CD4-positive, alpha-beta memory T cell (primary cell): ENCODE measurements at regions of chr11 and their contacts with region 1.

Region 1: GRCh38 chr11:33320016-33320813 is 63.0 kb downstream of the HIPK3 start:
- DNase-seq: no peak
- H3K4me3 ChIP-seq: no peak overlapping the region
- H3K4me3 Mint-ChIP-seq: no peak overlapping the region
- H3K27ac ChIP-seq: no peak overlapping the region
- H3K27ac Mint-ChIP-seq: no peak overlapping the region
- H3K4me1 ChIP-seq: peaks cover 40% of the 10 kb centered on the region
- H3K4me1 Mint-ChIP-seq: peaks cover 26 to 43% (median 33%) of the 10 kb centered on the region in 4 donors
- H3K27me3 ChIP-seq: no peaks in the 10 kb centered on the region
- H3K27me3 Mint-ChIP-seq: no peaks in the 10 kb centered on the region

Region 2: GRCh38 chr11:33307984-33308383 is 12.2 kb before region 1 on chr11:
- CTCF ChIA-PET with region 1: no interaction called
- POLR2A ChIA-PET with region 1: interaction called, 3 read pairs
- intact Hi-C with region 1: loop called (anchors 2 kb)
- DNase-seq: no peak
- H3K4me3 ChIP-seq: no peak overlapping the region
- H3K4me3 Mint-ChIP-seq: peak overlapping the region in 1 of 8 donors; percentile 2
- H3K27ac ChIP-seq: no peak overlapping the region
- H3K27ac Mint-ChIP-seq: peak overlapping the region in 2 of 7 donors; percentile 3 to 47
- H3K4me1 ChIP-seq: peaks cover 21% of the 10 kb centered on the region
- H3K4me1 Mint-ChIP-seq: peaks cover 36 to 70% (median 47%) of the 10 kb centered on the region in 4 donors
- H3K27me3 ChIP-seq: no peaks in the 10 kb centered on the region
- H3K27me3 Mint-ChIP-seq: no peaks in the 10 kb centered on the region